ENCODE measurements at regions of chr15 and their contacts with region 1.

Region 1: GRCh38 chr15:79492065-79492464 is 59.9 kb downstream of the MINAR1 start:
- DNase-seq: no peak
- ATAC-seq: no peak
- H3K4me3 ChIP-seq: no peak overlapping the region
- H3K27ac ChIP-seq: no peak overlapping the region
- H3K4me1 ChIP-seq: no peaks in the 10 kb centered on the region
- H3K27me3 ChIP-seq: peaks cover 0 to 11% (median 0%) of the 10 kb centered on the region in 9 donors
- CTCF ChIP-seq: no peak
- POLR2A ChIP-seq: no peak

Region 2: GRCh38 chr15:79570689-79571088 is 78.6 kb after region 1 on chr15:
- intact Hi-C with region 1: loop called in 1 of 10 experiments (anchors 2 kb)
- DNase-seq: no peak
- ATAC-seq: no peak
- H3K4me3 ChIP-seq: no peak overlapping the region
- H3K27ac ChIP-seq: no peak overlapping the region
- H3K4me1 ChIP-seq: no peaks in the 10 kb centered on the region
- H3K27me3 ChIP-seq: no peaks in the 10 kb centered on the region
- CTCF ChIP-seq: no peak
- POLR2A ChIP-seq: no peak